B cell (primary cell): ENCODE measurements at regions of chr7 and their contacts with region 1.

Region 1: GRCh38 chr7:22110227-22110839 is 164.6 kb upstream of the CDCA7L start:
- DNase-seq: peak; percentile 86
- ATAC-seq: peak; percentile 90
- H3K4me3 ChIP-seq: no peak overlapping the region
- H3K4me3 Mint-ChIP-seq: no peak overlapping the region
- H3K27ac ChIP-seq: no peak overlapping the region
- H3K27ac Mint-ChIP-seq: no peak overlapping the region
- H3K4me1 ChIP-seq: no peaks in the 10 kb centered on the region
- H3K4me1 Mint-ChIP-seq: no peaks in the 10 kb centered on the region
- H3K27me3 ChIP-seq: no peaks in the 10 kb centered on the region
- H3K27me3 Mint-ChIP-seq: no peaks in the 10 kb centered on the region
- CTCF ChIP-seq: peak; percentile 85

Region 2: GRCh38 chr7:22127835-22128527 is 17.6 kb after region 1 on chr7:
- CTCF ChIA-PET with region 1: interaction called, 19 read pairs
- POLR2A ChIA-PET with region 1: no interaction called
- intact Hi-C with region 1: no loop called
- DNase-seq: no peak
- ATAC-seq: no peak
- H3K4me3 ChIP-seq: no peak overlapping the region
- H3K4me3 Mint-ChIP-seq: no peak overlapping the region
- H3K27ac ChIP-seq: no peak overlapping the region
- H3K27ac Mint-ChIP-seq: no peak overlapping the region
- H3K4me1 ChIP-seq: no peaks in the 10 kb centered on the region
- H3K4me1 Mint-ChIP-seq: no peaks in the 10 kb centered on the region
- H3K27me3 ChIP-seq: no peaks in the 10 kb centered on the region
- H3K27me3 Mint-ChIP-seq: no peaks in the 10 kb centered on the region
- CTCF ChIP-seq: no peak

Region 3: DNA sequence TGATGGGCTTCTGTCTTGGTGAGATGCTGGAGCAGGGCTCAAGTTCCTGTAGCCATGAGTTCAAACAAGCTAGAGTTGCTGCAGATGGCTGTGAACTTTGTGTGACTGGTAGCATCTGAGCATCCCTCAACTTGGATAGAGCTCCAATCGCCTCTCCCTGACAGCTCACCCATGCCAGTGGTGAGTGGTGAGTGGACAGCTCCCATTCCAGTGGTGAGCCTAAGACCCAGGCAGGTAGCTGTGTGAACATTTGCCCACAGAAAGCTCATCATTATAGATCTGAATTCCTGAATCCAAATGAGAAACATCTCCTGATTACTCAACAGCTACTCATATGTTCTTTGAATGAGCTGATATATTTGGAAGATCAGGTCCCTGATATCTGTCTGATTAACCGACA is 364.3 kb after region 1 on chr7:
- CTCF ChIA-PET with region 1: interaction called, 109 read pairs
- POLR2A ChIA-PET with region 1: no interaction called
- intact Hi-C with region 1: no loop called
- DNase-seq: no peak
- ATAC-seq: no peak
- H3K4me3 ChIP-seq: no peak overlapping the region
- H3K4me3 Mint-ChIP-seq: no peak overlapping the region
- H3K27ac ChIP-seq: no peak overlapping the region
- H3K27ac Mint-ChIP-seq: no peak overlapping the region
- H3K4me1 ChIP-seq: no peaks in the 10 kb centered on the region
- H3K4me1 Mint-ChIP-seq: no peaks in the 10 kb centered on the region
- H3K27me3 ChIP-seq: no peaks in the 10 kb centered on the region
- H3K27me3 Mint-ChIP-seq: no peaks in the 10 kb centered on the region
- CTCF ChIP-seq: no peak

Region 4: GRCh38 chr7:22488643-22489462 is 378.5 kb after region 1 on chr7:
- CTCF ChIA-PET with region 1: interaction called, 109 read pairs
- POLR2A ChIA-PET with region 1: no interaction called
- intact Hi-C with region 1: loop called (anchors 1 kb)
- DNase-seq: peak; percentile 79
- ATAC-seq: peak; percentile 72
- H3K4me3 ChIP-seq: no peak overlapping the region
- H3K4me3 Mint-ChIP-seq: no peak overlapping the region
- H3K27ac ChIP-seq: no peak overlapping the region
- H3K27ac Mint-ChIP-seq: no peak overlapping the region
- H3K4me1 ChIP-seq: no peaks in the 10 kb centered on the region
- H3K4me1 Mint-ChIP-seq: peaks cover 5% of the 10 kb centered on the region
- H3K27me3 ChIP-seq: no peaks in the 10 kb centered on the region
- H3K27me3 Mint-ChIP-seq: no peaks in the 10 kb centered on the region
- CTCF ChIP-seq: peak; percentile 92